SK-N-SH (cell line): ENCODE measurements at regions of chr10 and their contacts with region 1.

Region 1: DNA sequence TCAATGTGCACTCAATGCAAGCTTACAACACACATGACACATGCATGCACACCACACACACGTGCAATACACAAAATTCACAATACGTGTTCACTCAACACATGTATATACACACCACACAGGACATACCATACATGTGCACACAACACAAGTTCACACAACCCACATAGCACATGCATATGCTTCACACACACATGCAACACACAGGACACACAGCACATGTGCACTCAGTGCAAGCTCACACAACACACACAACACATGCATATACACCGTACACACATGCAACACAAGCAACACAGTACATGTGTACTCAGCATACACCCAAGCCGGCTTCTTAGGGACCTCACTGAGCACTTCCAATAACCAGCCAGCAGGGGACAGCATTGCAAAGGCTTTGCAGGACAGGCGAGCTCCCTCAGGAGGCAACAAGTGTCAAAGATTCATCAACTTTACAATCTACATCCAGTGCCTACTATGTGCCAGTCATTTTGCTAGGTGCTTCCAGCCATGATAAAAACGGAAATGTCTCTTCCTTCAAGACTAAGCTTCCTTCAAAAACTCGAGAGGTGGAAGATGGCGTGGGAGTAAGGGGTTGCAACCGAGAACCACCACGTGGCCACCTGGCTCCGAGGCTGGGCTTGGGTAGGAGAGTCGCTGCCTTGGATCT is 61.1 kb downstream of the JCAD start:
- DNase-seq: peak; percentile 71
- H3K4me3 ChIP-seq: no peak overlapping the region
- H3K27ac ChIP-seq: no peak overlapping the region
- H3K4me1 ChIP-seq: peaks cover 6 to 37% of the 10 kb centered on the region in 2 experiments; a peak in 3 of 4 replicates
- H3K27me3 ChIP-seq: no peaks in the 10 kb centered on the region
- CTCF ChIP-seq: peak; percentile 99
- EP300 ChIP-seq: no peak
- RAD21 ChIP-seq: peak; percentile 99

Region 2: DNA sequence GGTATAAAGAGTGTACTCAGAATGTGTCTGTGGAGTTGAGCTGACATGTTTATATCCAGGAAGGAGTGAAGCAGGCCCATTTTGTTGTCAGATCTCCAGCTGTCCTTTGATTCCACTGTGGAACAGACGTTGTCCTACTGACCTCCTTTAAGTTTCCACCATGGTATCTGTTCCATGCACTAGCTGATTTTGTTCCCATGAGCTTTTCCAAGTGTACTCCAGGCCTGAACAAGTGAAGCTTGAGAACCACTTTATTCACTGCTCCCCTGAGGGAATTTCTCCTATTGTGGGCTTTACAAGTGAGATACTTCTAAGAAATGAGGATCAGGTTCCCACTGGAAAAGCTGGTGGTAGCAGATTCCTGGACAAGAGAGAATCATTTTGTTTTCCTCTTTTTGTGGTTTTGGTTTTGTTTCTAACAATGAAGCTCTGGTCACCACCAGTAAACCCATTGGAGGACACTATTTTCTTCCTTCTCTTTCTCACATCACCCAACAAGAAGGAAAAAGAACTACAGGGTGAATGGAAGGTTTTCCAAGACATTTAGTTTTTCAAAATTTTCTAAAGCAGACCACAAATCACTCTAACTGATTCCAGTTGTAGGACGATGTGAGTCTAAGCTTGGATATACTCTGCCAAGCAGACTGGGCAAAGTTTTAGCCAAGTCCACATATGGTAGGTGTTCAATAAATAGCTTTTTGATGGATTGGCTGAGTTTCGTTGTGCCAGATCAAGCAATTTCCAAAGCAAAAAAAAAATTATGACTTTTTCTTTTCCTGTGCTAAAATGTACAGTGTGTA is 83.1 kb before region 1 on chr10:
- CTCF ChIA-PET with region 1: interaction called, 10 read pairs
- POLR2A ChIA-PET with region 1: no interaction called
- DNase-seq: no peak
- H3K4me3 ChIP-seq: no peak overlapping the region
- H3K27ac ChIP-seq: no peak overlapping the region
- H3K4me1 ChIP-seq: no peaks in the 10 kb centered on the region
- H3K27me3 ChIP-seq: no peaks in the 10 kb centered on the region
- CTCF ChIP-seq: no peak
- EP300 ChIP-seq: no peak
- RAD21 ChIP-seq: no peak

Region 3: DNA sequence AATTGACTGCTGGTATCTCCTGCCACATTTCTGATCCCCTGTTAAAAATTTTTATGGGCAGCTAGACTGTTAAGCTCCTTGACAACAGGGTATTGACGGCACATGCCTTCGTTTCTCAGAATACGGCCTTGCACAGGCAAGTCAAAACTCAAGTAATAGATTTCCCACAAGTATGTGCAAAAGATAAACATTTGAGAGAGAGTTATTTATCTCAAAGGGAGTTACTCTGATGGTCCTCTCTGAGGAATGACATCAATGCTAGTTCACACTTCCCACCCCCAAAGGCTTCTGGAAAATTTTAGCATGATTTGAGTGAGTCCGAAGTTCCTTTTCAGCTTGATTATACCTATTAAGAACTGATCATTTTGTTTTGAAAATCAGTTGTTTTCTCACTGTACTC is 10.8 kb before region 1 on chr10:
- CTCF ChIA-PET with region 1: interaction called, 12 read pairs
- POLR2A ChIA-PET with region 1: no interaction called
- DNase-seq: no peak
- H3K4me3 ChIP-seq: no peak overlapping the region
- H3K27ac ChIP-seq: no peak overlapping the region
- H3K4me1 ChIP-seq: no peaks in the 10 kb centered on the region
- H3K27me3 ChIP-seq: no peaks in the 10 kb centered on the region
- CTCF ChIP-seq: no peak
- EP300 ChIP-seq: no peak
- RAD21 ChIP-seq: no peak

Region 4: DNA sequence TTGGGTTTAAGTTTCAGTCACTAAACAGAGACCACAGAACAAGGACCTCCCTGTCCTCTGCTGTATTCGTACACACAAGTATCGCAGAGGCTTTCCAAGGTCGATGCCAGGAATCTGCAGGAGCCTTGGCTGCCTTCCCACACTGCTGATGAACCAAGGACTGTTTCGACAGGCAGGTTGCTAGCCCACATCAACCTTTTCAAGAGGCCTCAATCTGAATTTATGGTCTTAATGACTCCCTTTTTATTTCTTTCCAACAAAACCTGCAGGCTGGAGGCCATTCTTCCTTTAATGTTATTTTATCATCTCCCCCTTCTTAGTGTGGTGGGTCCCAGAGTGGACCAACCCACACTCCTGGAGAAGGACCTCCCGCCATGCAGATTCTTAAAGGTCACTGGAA is 15.5 kb after region 1 on chr10:
- CTCF ChIA-PET with region 1: interaction called, 70 read pairs
- POLR2A ChIA-PET with region 1: no interaction called
- DNase-seq: no peak
- H3K4me3 ChIP-seq: no peak overlapping the region
- H3K27ac ChIP-seq: no peak overlapping the region; a peak in 1 of 4 replicates
- H3K4me1 ChIP-seq: peaks cover 9 to 23% of the 10 kb centered on the region in 2 experiments; a peak in 3 of 4 replicates
- H3K27me3 ChIP-seq: no peaks in the 10 kb centered on the region
- CTCF ChIP-seq: no peak
- EP300 ChIP-seq: no peak
- RAD21 ChIP-seq: no peak

Region 5: DNA sequence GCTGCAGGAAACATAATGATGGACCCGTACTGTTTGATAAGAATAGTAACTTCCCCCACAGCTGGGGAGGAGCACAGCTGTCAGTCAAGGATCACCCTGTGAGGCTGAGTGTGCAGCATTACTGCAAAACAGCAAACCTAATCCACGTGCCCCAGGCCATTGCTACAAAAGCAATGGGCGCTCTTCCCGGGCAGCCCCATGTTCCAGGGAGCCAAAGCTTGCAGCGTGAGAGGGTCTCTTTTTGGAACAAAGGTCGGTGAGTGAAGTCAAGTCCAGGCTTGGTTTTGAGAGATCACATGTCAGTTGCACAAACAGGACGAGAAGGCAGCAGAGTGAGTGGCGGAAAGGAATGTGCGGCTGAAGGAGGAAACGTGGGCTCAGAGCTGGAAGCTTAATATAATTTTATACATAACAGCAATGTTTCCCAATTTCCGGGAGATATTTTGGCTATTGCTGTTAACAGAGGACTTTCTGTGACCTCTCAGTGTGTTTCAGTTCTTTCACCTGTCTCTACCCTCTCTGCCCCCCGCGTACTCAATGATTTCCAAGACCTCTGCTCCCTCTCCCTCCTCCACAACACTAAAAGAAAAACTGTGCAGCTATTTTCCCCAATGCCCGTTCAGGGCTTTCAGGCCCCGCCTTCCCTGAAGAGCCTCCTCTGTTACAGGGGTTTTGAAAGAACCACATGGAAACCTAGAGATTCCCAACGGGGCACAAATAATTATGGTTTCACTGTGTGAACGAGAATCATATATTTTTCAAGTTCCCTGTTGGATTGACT is 221.9 kb after region 1 on chr10:
- CTCF ChIA-PET with region 1: interaction called, 11 read pairs
- POLR2A ChIA-PET with region 1: no interaction called
- DNase-seq: no peak
- H3K4me3 ChIP-seq: no peak overlapping the region
- H3K27ac ChIP-seq: no peak overlapping the region
- H3K4me1 ChIP-seq: no peaks in the 10 kb centered on the region
- H3K27me3 ChIP-seq: no peaks in the 10 kb centered on the region
- CTCF ChIP-seq: no peak
- EP300 ChIP-seq: no peak
- RAD21 ChIP-seq: no peak

Region 6: GRCh38 chr10:30231071-30231652 is 232.9 kb after region 1 on chr10:
- CTCF ChIA-PET with region 1: interaction called, 17 read pairs
- POLR2A ChIA-PET with region 1: no interaction called
- DNase-seq: no peak
- H3K4me3 ChIP-seq: no peak overlapping the region
- H3K27ac ChIP-seq: no peak overlapping the region
- H3K4me1 ChIP-seq: peaks cover 0 to 11% of the 10 kb centered on the region in 2 experiments; a peak in 1 of 4 replicates
- H3K27me3 ChIP-seq: no peaks in the 10 kb centered on the region
- CTCF ChIP-seq: no peak
- EP300 ChIP-seq: no peak
- RAD21 ChIP-seq: no peak

Region 7: GRCh38 chr10:30241422-30242110 is 243.3 kb after region 1 on chr10:
- CTCF ChIA-PET with region 1: interaction called, 131 read pairs
- POLR2A ChIA-PET with region 1: no interaction called
- DNase-seq: no peak
- H3K4me3 ChIP-seq: no peak overlapping the region
- H3K27ac ChIP-seq: no peak overlapping the region
- H3K4me1 ChIP-seq: no peaks in the 10 kb centered on the region
- H3K27me3 ChIP-seq: no peaks in the 10 kb centered on the region
- CTCF ChIP-seq: no peak
- EP300 ChIP-seq: no peak
- RAD21 ChIP-seq: no peak